ENCODE measurements at regions of chr11 and their contacts with region 1.

Region 1: GRCh38 chr11:47552566-47553416 is at the start of gene CELF1:
- DNase-seq: peak; percentile 83
- ATAC-seq: peak; percentile 98
- H3K4me3 ChIP-seq: peak within 1 kb of the TSS; percentile 99
- H3K27ac ChIP-seq: peak within 1 kb of the TSS; percentile 93
- H3K4me1 ChIP-seq: peaks cover 3% of the 10 kb centered on the region
- H3K27me3 ChIP-seq: no peaks in the 10 kb centered on the region
- CTCF ChIP-seq: peak; percentile 96
- POLR2A ChIP-seq: peak; percentile 43; the same call in 1 of the 2 replicates
- RAD21 ChIP-seq: peak; percentile 72
- total RNA-seq, gene CELF1: 109 and 135 TPM in 2 replicates

Region 2: GRCh38 chr11:47607380-47607779 is 54.6 kb after region 1 on chr11:
- CTCF ChIA-PET with region 1: no interaction called
- POLR2A ChIA-PET with region 1: interaction called, 3 read pairs
- dilution Hi-C with region 1: no loop called
- in situ Hi-C with region 1: no loop called
- intact Hi-C with region 1: loop called (anchors 1 kb)
- DNase-seq: peak; percentile 96
- ATAC-seq: peak; percentile 97
- H3K4me3 ChIP-seq: no peak overlapping the region
- H3K27ac ChIP-seq: no peak overlapping the region
- H3K4me1 ChIP-seq: peaks cover 8% of the 10 kb centered on the region
- H3K27me3 ChIP-seq: no peaks in the 10 kb centered on the region
- CTCF ChIP-seq: no peak
- POLR2A ChIP-seq: no peak
- RAD21 ChIP-seq: peak; percentile 24; the same call in 1 of the 2 replicates

Region 3: GRCh38 chr11:47631473-47631872 is 78.7 kb after region 1 on chr11:
- CTCF ChIA-PET with region 1: no interaction called
- POLR2A ChIA-PET with region 1: no interaction called
- dilution Hi-C with region 1: no loop called
- in situ Hi-C with region 1: no loop called
- intact Hi-C with region 1: no loop called
- DNase-seq: peak; percentile 19
- ATAC-seq: peak; percentile 27; the same call in 1 of the 2 replicates
- H3K4me3 ChIP-seq: no peak overlapping the region
- H3K27ac ChIP-seq: no peak overlapping the region
- H3K4me1 ChIP-seq: no peaks in the 10 kb centered on the region
- H3K27me3 ChIP-seq: no peaks in the 10 kb centered on the region
- CTCF ChIP-seq: no peak
- POLR2A ChIP-seq: no peak
- RAD21 ChIP-seq: no peak